ENCODE measurements at regions of chr11 and their contacts with region 1.

Region 1: DNA sequence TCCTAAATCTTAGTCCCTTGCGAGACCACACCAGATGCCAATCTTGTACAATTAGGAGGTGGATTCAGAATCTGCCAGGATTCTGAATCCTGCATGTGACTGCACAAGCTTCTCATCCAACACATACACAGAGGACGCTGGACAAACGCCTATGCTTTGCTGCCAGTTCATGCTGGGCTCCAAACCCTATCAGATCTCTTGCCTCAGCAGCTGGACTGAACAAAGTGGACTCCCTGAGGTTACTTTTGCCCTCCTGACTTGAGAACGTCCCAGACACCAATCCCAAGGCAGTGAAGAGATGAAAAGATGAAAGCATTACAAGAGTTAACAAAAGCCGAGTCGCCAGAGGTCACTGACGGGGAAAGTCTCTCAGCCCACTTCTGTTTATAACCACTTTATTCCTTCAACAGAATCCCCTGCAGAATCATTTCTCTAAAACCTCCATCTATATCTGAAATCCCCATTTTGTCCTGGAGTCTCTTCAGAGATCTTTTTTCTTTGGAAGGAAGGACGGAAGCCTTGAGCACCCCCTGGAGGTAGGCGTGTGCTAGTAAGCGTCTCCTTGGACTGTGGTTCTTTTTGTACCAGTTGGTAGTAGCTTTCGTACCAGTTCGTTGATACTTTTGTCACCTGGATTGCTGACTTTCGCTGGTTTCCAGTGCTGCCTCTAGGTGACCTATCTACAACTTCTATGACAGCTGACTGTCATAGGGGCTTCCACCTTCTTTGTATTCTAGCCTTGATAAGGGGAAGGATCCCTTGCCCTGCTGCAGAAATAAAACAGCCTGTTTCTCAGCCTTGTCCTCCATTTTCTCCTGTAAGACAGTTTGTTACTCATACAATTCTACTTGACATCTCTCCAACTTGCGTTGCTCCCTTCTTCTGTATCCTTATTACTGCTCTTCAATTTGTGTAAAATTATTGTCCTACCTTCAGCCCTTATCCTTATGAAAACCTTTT is 26.1 kb upstream of the EED start:
- DNase-seq: peak; percentile 49
- H3K4me3 Mint-ChIP-seq: peak overlapping the region; percentile 13
- H3K27ac Mint-ChIP-seq: peak overlapping the region; percentile 70
- H3K4me1 Mint-ChIP-seq: peaks cover 67% of the 10 kb centered on the region
- H3K27me3 Mint-ChIP-seq: no peaks in the 10 kb centered on the region

Region 2: GRCh38 chr11:85369731-85370130 is 848.7 kb before region 1 on chr11:
- intact Hi-C with region 1: no loop called
- DNase-seq: no peak
- H3K4me3 Mint-ChIP-seq: no peak overlapping the region
- H3K27ac Mint-ChIP-seq: no peak overlapping the region
- H3K4me1 Mint-ChIP-seq: no peaks in the 10 kb centered on the region
- H3K27me3 Mint-ChIP-seq: no peaks in the 10 kb centered on the region

Region 3: DNA sequence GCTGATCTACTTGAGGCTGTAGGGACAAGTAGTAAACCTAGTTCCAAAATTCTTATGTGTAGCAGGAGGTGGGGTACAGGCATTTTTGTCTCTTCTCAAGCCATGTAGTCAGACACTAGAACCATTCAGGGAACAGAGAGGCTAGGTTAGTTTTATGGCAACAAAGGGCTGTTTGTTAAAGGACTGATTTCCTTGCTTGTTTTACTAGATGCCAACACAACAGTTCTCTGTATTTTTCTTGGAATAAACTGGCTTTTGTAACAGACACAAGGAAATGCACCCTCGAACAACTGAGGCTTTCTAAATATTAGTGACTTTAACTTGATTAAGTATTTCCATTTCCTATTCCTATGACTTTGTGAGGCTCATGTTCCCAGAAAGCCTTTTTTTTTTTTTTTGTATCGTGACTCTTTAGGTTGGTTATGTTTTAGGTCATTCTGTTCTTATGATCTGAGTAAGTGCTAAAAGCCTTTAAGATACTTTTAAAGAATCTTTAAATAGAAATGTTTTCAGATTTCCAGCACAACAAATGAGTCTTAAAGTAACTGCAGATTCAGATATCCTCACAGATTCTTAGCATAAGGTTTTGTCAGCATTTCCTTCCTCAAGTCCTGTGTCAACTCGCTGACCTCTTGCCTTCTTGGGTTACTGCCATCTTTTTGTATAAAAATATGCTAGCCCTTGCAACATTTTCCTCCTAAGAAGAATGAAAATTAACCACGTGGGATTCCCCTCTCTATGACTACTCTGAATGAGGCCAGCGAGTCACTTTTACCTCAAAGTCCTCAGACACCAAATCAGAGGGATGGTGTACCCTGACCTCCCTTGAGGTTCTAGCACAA is 270.8 kb before region 1 on chr11:
- intact Hi-C with region 1: loop called (anchors 2 kb)
- DNase-seq: no peak
- H3K4me3 Mint-ChIP-seq: peak overlapping the region; percentile 15
- H3K27ac Mint-ChIP-seq: peak overlapping the region; percentile 75
- H3K4me1 Mint-ChIP-seq: peaks cover 35% of the 10 kb centered on the region
- H3K27me3 Mint-ChIP-seq: no peaks in the 10 kb centered on the region

Region 4: DNA sequence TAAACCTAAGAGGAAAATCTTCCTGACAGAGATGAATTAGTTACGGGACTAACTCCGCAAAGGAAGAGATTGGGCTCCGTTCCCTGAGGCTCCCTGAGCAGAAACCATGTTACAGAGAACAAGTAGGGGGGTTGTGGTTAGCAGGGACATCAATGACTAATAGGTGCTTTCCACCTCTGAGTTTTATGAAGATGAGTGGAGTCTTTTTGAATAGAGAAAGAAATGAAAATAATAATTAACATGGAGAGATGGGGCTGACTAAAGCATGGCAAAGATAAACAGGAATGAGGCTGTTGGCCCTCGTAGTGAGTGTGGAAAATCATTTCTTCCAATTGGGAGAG is 102.0 kb before region 1 on chr11:
- intact Hi-C with region 1: loop called (anchors 1 kb)
- DNase-seq: no peak
- H3K4me3 Mint-ChIP-seq: peak overlapping the region; percentile 22
- H3K27ac Mint-ChIP-seq: peak overlapping the region; percentile 83
- H3K4me1 Mint-ChIP-seq: peaks cover 42% of the 10 kb centered on the region
- H3K27me3 Mint-ChIP-seq: no peaks in the 10 kb centered on the region

Region 5: DNA sequence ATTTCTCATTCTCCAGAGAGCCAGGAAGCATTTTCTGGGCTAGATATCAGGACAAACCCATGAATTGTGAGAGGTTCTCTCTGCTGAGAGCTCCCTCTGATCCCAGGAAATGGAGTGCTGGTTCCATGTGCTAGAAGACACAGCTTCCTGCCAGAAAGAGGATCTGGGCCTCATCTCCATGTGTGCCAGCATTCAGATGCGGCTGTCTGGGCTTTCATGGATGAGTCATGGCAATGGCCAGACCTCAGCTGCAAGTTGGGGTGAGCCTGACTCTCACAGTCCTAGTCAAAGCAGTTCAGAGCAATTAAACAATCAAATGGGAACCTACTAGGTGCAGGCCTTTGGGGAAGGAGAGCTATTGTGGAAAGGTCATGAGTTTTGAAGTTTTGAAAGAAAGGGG is 56.2 kb before region 1 on chr11:
- intact Hi-C with region 1: no loop called
- DNase-seq: no peak
- H3K4me3 Mint-ChIP-seq: no peak overlapping the region
- H3K27ac Mint-ChIP-seq: no peak overlapping the region
- H3K4me1 Mint-ChIP-seq: peaks cover 31% of the 10 kb centered on the region
- H3K27me3 Mint-ChIP-seq: no peaks in the 10 kb centered on the region

Region 6: DNA sequence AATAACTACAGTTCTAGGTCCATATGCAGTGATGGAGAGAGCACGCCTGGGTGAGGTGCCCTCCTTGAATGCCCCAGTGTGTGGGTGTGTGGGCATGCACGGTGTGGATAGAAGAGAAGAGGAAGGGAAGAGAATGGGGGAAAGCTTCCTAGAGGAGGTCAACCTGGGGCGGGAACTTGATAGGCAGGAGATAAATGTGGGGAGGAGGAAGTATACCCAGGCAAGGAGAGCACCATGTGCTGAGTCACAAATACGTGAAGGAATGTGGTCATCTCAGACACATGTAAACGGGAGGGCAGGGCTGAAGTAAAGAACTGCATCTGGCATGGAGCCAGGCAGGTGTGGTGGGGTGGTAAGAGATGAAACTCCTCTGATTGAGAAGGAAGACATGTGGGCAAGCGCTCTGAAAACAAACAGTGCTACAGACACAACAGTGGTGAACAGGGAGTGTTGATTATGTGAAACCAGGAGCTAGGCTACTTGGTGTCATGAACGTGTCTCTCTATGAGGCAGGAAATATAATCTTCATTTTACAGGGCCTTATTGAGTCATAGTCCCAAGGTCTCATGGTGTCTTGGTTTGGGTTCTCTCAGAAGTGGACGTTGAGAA is 35.3 kb before region 1 on chr11:
- intact Hi-C with region 1: loop called (anchors 1 kb)
- DNase-seq: peak; percentile 48
- H3K4me3 Mint-ChIP-seq: no peak overlapping the region
- H3K27ac Mint-ChIP-seq: no peak overlapping the region
- H3K4me1 Mint-ChIP-seq: peaks cover 26% of the 10 kb centered on the region
- H3K27me3 Mint-ChIP-seq: no peaks in the 10 kb centered on the region

Region 7: GRCh38 chr11:86230921-86231430 is 12.6 kb after region 1 on chr11:
- intact Hi-C with region 1: loop called (anchors 1 kb)
- DNase-seq: no peak
- H3K4me3 Mint-ChIP-seq: no peak overlapping the region
- H3K27ac Mint-ChIP-seq: peak overlapping the region; percentile 38
- H3K4me1 Mint-ChIP-seq: peaks cover 54% of the 10 kb centered on the region
- H3K27me3 Mint-ChIP-seq: peaks cover 3% of the 10 kb centered on the region

Region 8: DNA sequence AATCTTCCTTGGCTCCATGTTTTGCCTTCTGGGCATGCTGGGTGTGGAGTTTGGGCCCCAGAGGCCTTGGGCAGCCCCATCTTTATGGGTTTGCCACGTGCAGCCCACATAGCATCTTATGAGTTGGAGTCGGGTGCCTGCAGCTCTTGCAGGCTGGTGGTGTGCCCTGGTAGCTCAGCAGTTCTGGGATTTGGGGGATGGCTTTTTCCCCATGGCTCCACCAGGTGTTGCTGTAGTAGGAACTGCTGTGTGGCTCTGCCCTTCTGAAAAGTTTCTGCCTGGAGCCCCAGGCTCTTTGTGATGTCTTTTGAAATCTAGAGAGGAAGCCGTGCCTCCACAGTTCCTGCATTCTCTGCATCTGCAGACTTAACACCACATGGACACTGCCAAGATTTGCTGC is 42.9 kb after region 1 on chr11:
- intact Hi-C with region 1: no loop called
- DNase-seq: no peak
- H3K4me3 Mint-ChIP-seq: no peak overlapping the region
- H3K27ac Mint-ChIP-seq: no peak overlapping the region
- H3K4me1 Mint-ChIP-seq: peaks cover 15% of the 10 kb centered on the region
- H3K27me3 Mint-ChIP-seq: no peaks in the 10 kb centered on the region

Measured in activated T-helper 2 cell treated with anti-CD3 and anti-CD28 coated beads, Interferon-gamma antibody, Interleukin-2, Interleukin-4, amounts not matched to agents 10 μg/mL and 5 μg/mL and 100 μg/mL, durations not matched to agents 14 hours and 24 hours and 36 hours (primary cell).